ENCODE measurements at regions of chr19 and their contacts with region 1.

Region 1: GRCh38 chr19:19320362-19321142 is at the starts of genes MAU2 and SUGP1:
- DNase-seq: peak; percentile 91 to 92
- H3K4me3 ChIP-seq: peak within 1 kb of the TSS; percentile 100
- H3K4me3 Mint-ChIP-seq: peak within 1 kb of the TSS; percentile 77
- H3K27ac Mint-ChIP-seq: peak within 1 kb of the TSS; percentile 91
- H3K4me1 ChIP-seq: no peaks in the 10 kb centered on the region; the same call in 1 of the 2 replicates
- H3K4me1 Mint-ChIP-seq: peaks cover under 1% of the 10 kb centered on the region
- H3K27me3 ChIP-seq: no peaks in the 10 kb centered on the region
- H3K27me3 Mint-ChIP-seq: no peaks in the 10 kb centered on the region
- CTCF ChIP-seq: no peak
- total RNA-seq, gene MAU2: 51.3 and 62.6 TPM in 2 replicates
- total RNA-seq, gene SUGP1: 51.2 and 58.4 TPM in 2 replicates

Region 2: GRCh38 chr19:17654993-17655392 is 1665.6 kb before region 1 on chr19:
- CTCF ChIA-PET with region 1: interaction called, 10 read pairs
- POLR2A ChIA-PET with region 1: no interaction called
- intact Hi-C with region 1: no loop called
- DNase-seq: no peak
- H3K4me3 ChIP-seq: no peak overlapping the region
- H3K4me3 Mint-ChIP-seq: no peak overlapping the region
- H3K27ac Mint-ChIP-seq: no peak overlapping the region
- H3K4me1 ChIP-seq: no peaks in the 10 kb centered on the region
- H3K4me1 Mint-ChIP-seq: no peaks in the 10 kb centered on the region
- H3K27me3 ChIP-seq: no peaks in the 10 kb centered on the region
- H3K27me3 Mint-ChIP-seq: peaks cover 3% of the 10 kb centered on the region
- CTCF ChIP-seq: no peak

Region 3: DNA sequence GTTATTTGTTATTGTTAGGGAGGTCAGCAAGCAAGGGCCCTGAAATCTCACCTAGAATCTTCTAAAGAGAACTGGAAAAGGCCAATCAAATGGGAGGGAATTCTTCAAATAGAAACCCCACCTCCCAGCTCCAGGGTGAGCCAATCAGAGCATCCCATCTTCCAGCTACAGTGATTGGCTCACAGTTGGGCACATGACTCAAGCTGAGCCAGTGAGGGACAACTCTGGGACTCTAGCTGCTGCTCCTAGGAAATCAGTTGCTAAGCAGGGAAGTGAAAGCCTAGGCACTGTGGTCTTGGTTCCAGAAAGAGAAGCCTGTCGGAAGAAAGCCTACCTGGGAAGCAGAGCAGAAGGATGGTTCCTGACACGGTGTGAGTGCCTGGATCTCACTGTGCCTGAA is 60.8 kb before region 1 on chr19:
- CTCF ChIA-PET with region 1: no interaction called
- POLR2A ChIA-PET with region 1: no interaction called
- intact Hi-C with region 1: no loop called
- DNase-seq: no peak
- H3K4me3 ChIP-seq: no peak overlapping the region
- H3K4me3 Mint-ChIP-seq: no peak overlapping the region
- H3K27ac Mint-ChIP-seq: no peak overlapping the region
- H3K4me1 ChIP-seq: no peaks in the 10 kb centered on the region
- H3K4me1 Mint-ChIP-seq: peaks cover 8% of the 10 kb centered on the region
- H3K27me3 ChIP-seq: no peaks in the 10 kb centered on the region
- H3K27me3 Mint-ChIP-seq: peaks cover 9% of the 10 kb centered on the region
- CTCF ChIP-seq: no peak

Region 4: GRCh38 chr19:19354932-19355331 is 34.4 kb after region 1 on chr19:
- CTCF ChIA-PET with region 1: no interaction called
- POLR2A ChIA-PET with region 1: no interaction called
- intact Hi-C with region 1: no loop called
- DNase-seq: no peak
- H3K4me3 ChIP-seq: no peak overlapping the region
- H3K4me3 Mint-ChIP-seq: no peak overlapping the region
- H3K27ac Mint-ChIP-seq: no peak overlapping the region
- H3K4me1 ChIP-seq: no peaks in the 10 kb centered on the region
- H3K4me1 Mint-ChIP-seq: no peaks in the 10 kb centered on the region
- H3K27me3 ChIP-seq: no peaks in the 10 kb centered on the region
- H3K27me3 Mint-ChIP-seq: no peaks in the 10 kb centered on the region
- CTCF ChIP-seq: no peak

Region 5: DNA sequence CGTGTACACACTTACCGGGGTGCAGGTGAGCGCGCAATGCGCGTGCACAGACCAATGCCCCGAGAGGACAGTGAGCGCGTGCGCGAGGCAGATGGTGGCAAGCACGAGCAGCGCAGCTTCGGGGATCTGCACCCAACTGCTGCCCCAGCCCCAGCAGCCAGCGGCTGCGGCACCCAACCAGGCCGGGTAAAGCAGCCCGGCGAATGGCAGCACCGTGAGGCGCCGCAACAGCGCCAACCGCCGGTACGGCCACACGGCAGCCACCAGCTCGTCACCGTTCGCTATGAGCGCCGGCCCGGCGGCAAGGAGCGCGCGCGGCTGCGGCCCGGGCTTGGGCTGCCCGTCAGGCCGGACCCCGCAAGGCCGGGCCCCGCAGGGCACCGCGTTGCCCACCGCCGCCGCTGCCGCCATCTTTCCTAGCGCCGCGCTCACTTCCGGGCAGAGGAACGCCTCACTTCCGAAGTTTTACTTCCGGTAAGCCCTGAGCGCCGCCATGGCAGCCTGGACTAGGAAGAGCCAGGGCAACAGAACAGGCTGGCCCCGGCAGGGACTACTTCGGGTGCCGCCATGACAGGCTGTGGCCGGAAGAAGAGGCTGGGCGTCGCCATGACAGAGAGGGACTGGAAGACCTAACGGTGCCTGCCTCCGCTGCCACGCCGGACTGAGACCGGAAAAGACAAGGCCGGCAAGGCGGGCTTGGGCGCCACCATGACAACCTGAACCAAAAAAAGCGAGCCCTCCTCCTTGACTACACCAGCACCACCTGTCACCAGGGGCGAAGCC is 342.9 kb after region 1 on chr19 and contains the start of gene ATP13A1:
- CTCF ChIA-PET with region 1: no interaction called
- POLR2A ChIA-PET with region 1: no interaction called
- intact Hi-C with region 1: no loop called
- DNase-seq: peak; percentile 93 to 97
- H3K4me3 ChIP-seq: peak within 1 kb of the TSS; percentile 99
- H3K4me3 Mint-ChIP-seq: peak within 1 kb of the TSS; percentile 82
- H3K27ac Mint-ChIP-seq: peak within 1 kb of the TSS; percentile 93
- H3K4me1 ChIP-seq: no peaks in the 10 kb centered on the region; the same call in 1 of the 2 replicates
- H3K4me1 Mint-ChIP-seq: no peaks in the 10 kb centered on the region
- H3K27me3 ChIP-seq: no peaks in the 10 kb centered on the region
- H3K27me3 Mint-ChIP-seq: no peaks in the 10 kb centered on the region
- CTCF ChIP-seq: no peak
- total RNA-seq, gene ATP13A1: 83.0 and 93.1 TPM in 2 replicates